ENCODE measurements at regions of chr17 and their contacts with region 1.

Region 1: DNA sequence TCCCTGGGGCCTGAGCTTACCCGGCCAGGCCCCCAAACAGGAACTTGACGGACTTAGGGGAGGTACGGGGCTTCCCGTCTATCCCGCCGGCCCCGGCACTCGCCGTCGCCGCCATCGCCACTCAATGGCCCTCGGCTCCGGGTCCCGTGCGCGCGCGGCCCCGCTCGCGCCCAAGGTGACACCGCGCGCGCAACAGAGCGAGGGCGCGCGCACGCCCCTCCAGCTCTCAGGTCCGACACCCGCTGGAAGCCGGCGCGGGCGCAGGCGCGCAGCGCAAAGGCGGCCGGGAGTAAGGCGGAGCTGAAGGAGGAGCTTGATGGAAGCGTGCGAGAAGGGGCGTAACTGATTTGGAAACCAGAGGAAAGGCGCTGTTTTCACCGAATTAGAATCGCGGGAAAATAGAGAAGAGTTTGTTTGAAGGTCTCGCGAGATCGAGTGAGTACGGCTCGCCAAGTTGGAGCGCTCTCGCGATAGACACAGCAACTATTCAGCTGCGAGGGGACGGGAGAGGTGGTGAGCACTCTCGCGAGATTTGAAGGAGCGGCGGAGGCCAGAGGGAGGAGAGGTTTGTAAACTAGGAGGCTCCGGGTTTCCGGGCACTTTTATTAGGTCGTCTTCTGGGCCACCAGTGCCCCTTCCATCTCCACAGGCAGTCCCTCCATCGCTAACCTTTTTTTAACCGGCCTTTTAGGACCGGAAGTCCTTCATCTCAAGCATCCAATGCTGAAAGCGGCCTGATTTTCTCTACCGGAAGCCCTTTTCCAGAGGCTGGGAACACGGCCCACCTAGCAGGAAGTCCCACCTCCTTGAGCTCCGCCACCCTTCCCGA is at the starts of genes RNF167 and SLC25A11:
- DNase-seq: peak; percentile 98
- H3K4me3 Mint-ChIP-seq: peak within 1 kb of the TSS; percentile 94
- H3K27ac Mint-ChIP-seq: peak within 1 kb of the TSS; percentile 99
- H3K4me1 Mint-ChIP-seq: peaks cover 57% of the 10 kb centered on the region
- H3K27me3 Mint-ChIP-seq: no peaks in the 10 kb centered on the region
- total RNA-seq, gene RNF167: 133 to 140 TPM
- total RNA-seq, gene SLC25A11: 63.8 to 65.2 TPM

Region 2: GRCh38 chr17:3965118-3965803 is 974.7 kb before region 1 on chr17:
- CTCF ChIA-PET with region 1: no interaction called
- intact Hi-C with region 1: loop called (anchors 10 kb)
- DNase-seq: peak; percentile 83
- H3K4me3 Mint-ChIP-seq: peak overlapping the region; percentile 91
- H3K27ac Mint-ChIP-seq: peak overlapping the region; percentile 89
- H3K4me1 Mint-ChIP-seq: peaks cover 38% of the 10 kb centered on the region
- H3K27me3 Mint-ChIP-seq: no peaks in the 10 kb centered on the region

Region 3: GRCh38 chr17:4789901-4790704 is 149.9 kb before region 1 on chr17:
- CTCF ChIA-PET with region 1: interaction called, 5 read pairs
- intact Hi-C with region 1: loop called (anchors 2 kb)
- DNase-seq: peak; percentile 93
- H3K4me3 Mint-ChIP-seq: peak overlapping the region; percentile 85
- H3K27ac Mint-ChIP-seq: peak overlapping the region; percentile 95
- H3K4me1 Mint-ChIP-seq: peaks cover 30% of the 10 kb centered on the region
- H3K27me3 Mint-ChIP-seq: peaks cover 38% of the 10 kb centered on the region

Region 4: GRCh38 chr17:4908301-4908700 is 31.7 kb before region 1 on chr17:
- CTCF ChIA-PET with region 1: interaction called, 15 read pairs
- intact Hi-C with region 1: loop called (anchors 2 kb)
- DNase-seq: peak; percentile 34
- H3K4me3 Mint-ChIP-seq: no peak overlapping the region
- H3K27ac Mint-ChIP-seq: no peak overlapping the region
- H3K4me1 Mint-ChIP-seq: peaks cover 4% of the 10 kb centered on the region
- H3K27me3 Mint-ChIP-seq: no peaks in the 10 kb centered on the region

Region 5: DNA sequence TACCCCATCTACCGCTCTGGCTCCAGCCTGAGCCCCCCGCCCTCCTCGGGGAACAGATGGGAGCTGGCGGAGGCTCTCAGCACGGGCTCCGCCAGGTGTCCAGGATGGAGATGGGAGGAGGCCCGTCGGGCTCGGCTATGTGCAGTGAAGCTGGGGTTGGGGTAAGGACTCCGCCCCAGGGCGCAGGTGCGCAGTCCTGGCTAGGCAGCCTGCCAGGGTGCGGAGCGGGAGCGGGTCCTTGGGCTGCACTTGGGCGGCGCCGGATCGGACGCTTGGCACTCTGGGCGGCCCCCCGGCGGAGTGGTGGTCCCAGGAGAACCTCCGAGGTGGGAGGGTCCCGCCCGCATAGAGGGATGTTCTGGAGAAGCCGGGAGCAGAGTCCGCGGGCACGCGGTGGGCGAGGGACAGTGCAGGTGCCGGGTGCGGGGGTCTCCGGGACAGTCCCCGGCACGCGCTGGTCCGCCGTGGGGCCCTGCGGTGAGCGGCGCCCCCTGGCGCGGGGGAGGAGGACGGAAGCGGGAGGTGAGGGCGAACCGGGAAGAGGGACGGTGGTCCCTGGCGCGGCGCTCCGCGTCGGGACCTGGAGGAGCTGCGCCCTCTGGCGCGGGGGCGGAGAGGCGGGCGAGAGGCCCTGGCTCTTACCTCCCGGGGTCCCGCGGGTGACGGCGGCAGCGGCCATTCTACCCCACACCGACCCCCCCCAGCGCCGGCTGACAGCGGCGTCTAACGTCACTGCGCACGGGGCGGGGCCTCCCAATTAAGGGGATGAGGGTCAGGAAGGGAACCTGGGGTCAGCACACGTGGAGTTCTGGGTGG is 47.1 kb after region 1 on chr17 and contains the start of gene CAMTA2:
- CTCF ChIA-PET with region 1: no interaction called
- intact Hi-C with region 1: loop called (anchors 1 kb)
- DNase-seq: peak; percentile 87
- H3K4me3 Mint-ChIP-seq: peak within 1 kb of the TSS; percentile 88
- H3K27ac Mint-ChIP-seq: peak within 1 kb of the TSS; percentile 92
- H3K4me1 Mint-ChIP-seq: peaks cover 29% of the 10 kb centered on the region
- H3K27me3 Mint-ChIP-seq: no peaks in the 10 kb centered on the region
- total RNA-seq, gene CAMTA2: 79.1 to 79.5 TPM

Region 6: DNA sequence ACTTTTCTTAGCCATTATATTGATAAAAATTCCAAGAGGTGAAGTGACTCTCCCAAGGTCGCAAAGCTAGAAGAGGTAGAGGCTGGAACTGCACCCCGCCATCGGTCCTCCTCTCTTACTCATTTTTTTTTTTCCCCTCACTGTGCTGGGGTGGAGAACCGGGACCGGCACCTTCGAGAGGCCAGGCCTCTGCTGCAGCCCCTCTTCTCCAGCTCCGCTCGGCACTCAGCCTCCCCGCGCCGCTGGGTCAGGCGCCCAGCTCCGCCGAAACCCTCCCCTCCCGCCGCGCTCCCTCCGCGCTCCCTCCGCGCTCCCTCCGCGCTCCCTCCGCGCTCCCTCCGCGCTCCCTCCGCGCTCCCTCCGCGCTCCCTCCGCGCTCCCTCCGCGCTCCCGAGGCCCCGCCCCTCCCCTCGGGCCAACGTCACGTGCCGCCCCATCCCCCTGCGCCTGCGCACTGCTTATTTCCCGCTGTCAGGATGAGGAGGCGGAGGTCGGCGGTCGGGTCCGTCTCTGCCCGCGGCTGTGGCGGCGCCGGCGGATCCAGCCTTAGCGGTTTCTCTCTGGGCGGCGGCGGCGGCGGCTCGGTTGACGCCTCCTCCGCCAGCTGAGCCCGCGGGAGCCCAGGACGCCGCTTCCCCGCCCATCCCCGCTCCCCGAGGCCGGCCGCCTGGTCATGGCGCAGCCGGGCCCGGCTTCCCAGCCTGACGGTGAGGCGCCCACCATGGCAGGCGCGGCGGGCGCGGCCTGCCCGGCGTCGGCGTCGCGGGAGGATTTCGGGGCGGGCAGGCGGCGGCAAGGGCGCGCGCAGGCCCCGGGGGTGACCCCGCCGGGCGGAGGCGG is 342.0 kb after region 1 on chr17 and contains the start of gene RABEP1:
- CTCF ChIA-PET with region 1: no interaction called
- intact Hi-C with region 1: loop called (anchors 10 kb)
- DNase-seq: peak; percentile 94
- H3K4me3 Mint-ChIP-seq: peak within 1 kb of the TSS; percentile 91
- H3K27ac Mint-ChIP-seq: peak within 1 kb of the TSS; percentile 88
- H3K4me1 Mint-ChIP-seq: peaks cover 38% of the 10 kb centered on the region
- H3K27me3 Mint-ChIP-seq: no peaks in the 10 kb centered on the region
- total RNA-seq, gene RABEP1: 57.9 to 59.3 TPM

Measured in activated naive CD4-positive, alpha-beta T cell treated with anti-CD3 and anti-CD28 coated beads for 36 hours (primary cell).